ENCODE measurements at regions of chr18 and their contacts with region 1.

Region 1: DNA sequence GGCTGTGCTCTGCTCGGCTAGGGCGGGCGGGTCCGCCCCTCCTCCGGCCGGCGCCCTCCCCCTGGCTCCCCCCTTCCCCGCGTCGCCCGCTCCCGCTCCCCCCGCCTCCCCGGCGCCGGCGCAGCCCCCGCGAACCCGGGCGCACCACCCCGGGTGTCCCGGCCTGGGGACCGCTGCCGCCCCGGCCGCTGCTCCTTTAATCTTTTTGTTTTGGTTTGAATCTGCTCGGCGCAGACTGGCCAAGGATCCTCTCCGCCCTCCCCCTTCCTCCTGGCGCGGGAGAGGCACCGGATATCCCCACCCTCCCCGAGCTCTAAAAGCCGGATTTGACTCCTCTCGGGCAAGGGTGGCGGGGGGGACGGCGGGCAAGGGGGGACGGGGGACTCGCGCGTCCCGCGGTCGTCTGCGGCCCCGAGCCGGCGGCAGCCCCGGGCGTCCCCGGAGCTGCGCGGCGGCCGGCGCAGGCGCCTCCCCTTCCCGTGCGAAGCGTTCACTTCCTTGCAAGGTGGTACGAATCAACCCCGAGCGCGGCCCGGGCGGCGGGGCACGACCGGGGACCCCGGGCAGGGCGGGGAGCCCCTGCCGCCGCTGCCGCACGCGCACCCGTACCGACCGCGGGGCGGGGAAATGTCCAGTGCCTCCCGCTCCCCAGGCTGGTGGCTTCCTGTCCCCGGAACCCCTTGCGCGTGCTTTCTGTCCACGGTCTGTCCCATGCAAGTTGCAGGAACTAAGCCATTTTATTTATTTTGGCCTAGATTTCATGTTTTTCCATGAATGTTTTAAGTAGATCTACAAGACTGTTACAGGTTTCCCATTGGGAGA is at the start of gene PTGR3:
- DNase-seq: peak; percentile 44 to 91 (median 76)
- ATAC-seq: peak; percentile 51
- H3K4me3 ChIP-seq: peak within 1 kb of the TSS; percentile 65 to 82
- H3K4me3 Mint-ChIP-seq: peak within 1 kb of the TSS; percentile 99
- H3K27ac ChIP-seq: peak within 1 kb of the TSS; percentile 66 to 75
- H3K27ac Mint-ChIP-seq: peak within 1 kb of the TSS; percentile 93
- H3K4me1 ChIP-seq: peaks cover 55% of the 10 kb centered on the region
- H3K4me1 Mint-ChIP-seq: peaks cover 66% of the 10 kb centered on the region
- H3K27me3 ChIP-seq: no peaks in the 10 kb centered on the region
- H3K27me3 Mint-ChIP-seq: peaks cover 3% of the 10 kb centered on the region
- CTCF ChIP-seq: no peak
- total RNA-seq, gene PTGR3: 6.3 to 7.8 TPM

Region 2: DNA sequence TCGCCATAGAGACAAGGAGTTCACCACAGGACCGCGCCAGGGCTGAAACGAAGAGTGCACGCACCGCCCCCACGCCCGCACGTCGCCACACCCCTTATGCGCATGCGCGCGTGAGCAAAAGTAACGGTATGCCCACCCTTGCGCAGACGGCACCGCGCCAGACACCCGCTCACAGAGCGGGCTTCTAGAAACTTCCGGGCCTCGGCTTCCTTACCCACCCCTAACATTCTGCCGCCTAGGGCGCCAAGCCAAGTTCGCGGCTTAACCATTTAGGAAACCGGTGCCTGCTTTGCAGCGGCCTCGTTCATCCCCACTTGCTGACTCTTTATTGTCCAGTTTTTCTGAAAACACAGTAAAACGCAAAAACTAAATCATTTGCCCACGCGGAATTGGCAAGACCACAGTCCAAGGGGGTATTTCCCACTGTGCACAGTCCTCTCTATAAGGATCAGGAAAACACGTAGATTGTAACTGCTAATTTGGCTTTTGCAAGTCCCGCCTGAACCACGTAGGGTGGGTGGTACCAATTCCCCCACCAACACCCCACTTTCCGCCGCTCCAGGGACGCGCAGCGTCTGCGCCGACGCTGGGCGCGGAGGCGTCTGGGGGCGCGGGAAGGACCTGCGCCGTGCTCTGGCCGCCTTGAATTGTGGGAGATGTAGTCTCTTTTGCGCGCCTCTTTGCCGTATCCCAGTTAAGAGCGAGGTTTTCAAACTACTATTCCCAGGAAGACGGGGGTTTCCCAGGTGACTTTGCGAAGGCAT is 1061.4 kb before region 1 on chr18 and contains the starts of genes FBXO15 and TIMM21:
- CTCF ChIA-PET with region 1: no interaction called
- POLR2A ChIA-PET with region 1: no interaction called
- intact Hi-C with region 1: loop called (anchors 2 to 5 kb)
- DNase-seq: peak; percentile 89 to 99 (median 96)
- ATAC-seq: peak; percentile 83
- H3K4me3 ChIP-seq: peak within 1 kb of the TSS; percentile 84 to 91
- H3K4me3 Mint-ChIP-seq: peak within 1 kb of the TSS; percentile 90
- H3K27ac ChIP-seq: peak within 1 kb of the TSS; percentile 92 to 99
- H3K27ac Mint-ChIP-seq: peak within 1 kb of the TSS; percentile 92
- H3K4me1 ChIP-seq: peaks cover 21% of the 10 kb centered on the region
- H3K4me1 Mint-ChIP-seq: peaks cover 53% of the 10 kb centered on the region
- H3K27me3 ChIP-seq: no peaks in the 10 kb centered on the region
- H3K27me3 Mint-ChIP-seq: no peaks in the 10 kb centered on the region
- CTCF ChIP-seq: no peak
- total RNA-seq, gene FBXO15: 1.0 to 1.3 TPM
- total RNA-seq, gene TIMM21: 20.2 to 20.8 TPM

Region 3: DNA sequence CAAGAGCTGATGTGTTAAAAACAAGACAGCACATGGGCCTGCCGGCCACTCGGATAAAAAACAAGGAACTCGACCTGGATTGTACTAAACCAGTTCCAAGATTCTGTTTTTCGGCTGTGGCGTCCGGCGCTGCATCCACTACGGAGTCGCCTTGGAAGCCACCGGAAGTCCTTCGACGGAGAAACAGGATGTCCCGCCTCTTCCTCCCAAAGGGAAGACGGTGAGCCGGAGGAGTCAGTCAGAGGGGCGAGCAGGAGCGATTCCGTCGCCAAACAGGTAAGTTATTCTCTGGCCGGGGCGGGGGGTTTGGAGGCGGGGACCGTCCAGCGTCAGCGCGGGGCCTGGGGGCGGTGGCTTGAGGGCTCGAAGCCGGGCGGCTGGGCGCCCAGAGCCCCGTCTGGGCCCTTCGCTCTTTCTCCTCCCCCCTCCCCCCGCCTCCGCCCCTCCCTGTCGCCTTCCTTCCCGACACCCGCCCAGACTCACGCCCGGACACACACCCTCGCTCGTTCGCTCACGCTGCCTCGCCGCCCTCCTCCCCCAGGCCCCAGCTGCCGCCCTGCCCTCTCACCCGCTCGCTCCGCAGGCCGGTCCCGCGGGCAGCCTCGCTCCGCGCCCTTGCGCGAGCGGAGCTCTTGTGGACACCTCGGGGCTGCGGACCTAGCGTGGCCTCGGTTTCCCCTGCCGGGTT is 611.5 kb before region 1 on chr18 and contains the start of gene ZNF407:
- CTCF ChIA-PET with region 1: interaction called, 3 read pairs
- POLR2A ChIA-PET with region 1: interaction called, 8 read pairs
- intact Hi-C with region 1: loop called (anchors 1 kb)
- DNase-seq: peak; percentile 76 to 94 (median 86)
- ATAC-seq: peak; percentile 76
- H3K4me3 ChIP-seq: peak within 1 kb of the TSS; percentile 94 to 98
- H3K4me3 Mint-ChIP-seq: peak within 1 kb of the TSS; percentile 95
- H3K27ac ChIP-seq: peak within 1 kb of the TSS; percentile 94 to 98
- H3K27ac Mint-ChIP-seq: peak within 1 kb of the TSS; percentile 99
- H3K4me1 ChIP-seq: peaks cover 25% of the 10 kb centered on the region
- H3K4me1 Mint-ChIP-seq: peaks cover 50% of the 10 kb centered on the region
- H3K27me3 ChIP-seq: no peaks in the 10 kb centered on the region
- H3K27me3 Mint-ChIP-seq: no peaks in the 10 kb centered on the region
- CTCF ChIP-seq: no peak
- total RNA-seq, gene ZNF407: 18.4 to 18.5 TPM

Region 4: DNA sequence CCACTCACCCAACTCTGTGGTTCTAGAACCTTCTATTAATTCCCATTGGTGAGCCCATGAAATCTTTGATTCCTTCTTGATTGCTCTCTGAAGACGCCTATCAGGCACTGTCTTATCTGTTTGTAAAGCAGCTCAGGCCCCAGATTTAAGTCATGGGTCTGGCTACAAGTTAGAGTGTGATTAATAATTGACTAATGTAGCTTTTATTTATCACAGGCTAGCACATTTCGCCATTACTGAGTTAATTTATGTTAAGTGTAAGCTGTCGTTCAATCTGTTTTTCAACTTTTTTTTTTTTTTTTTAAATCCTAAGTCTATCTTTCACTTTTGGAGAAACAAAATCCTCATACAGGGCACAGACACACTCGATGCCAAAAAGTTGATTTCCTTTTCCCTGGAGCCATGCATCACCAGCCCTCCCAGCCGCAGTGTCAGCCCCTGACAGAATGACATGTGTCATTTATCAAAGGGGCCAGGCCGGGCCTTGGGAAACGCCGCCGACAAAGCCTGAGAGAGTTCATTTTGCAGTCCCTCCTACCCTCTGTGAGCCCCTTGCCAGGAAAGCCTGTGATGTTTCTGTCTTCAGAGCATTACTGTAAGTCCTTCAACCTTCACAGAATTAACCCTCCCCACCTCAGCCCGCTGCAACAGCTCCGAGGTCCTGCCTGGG is 17.1 kb after region 1 on chr18:
- CTCF ChIA-PET with region 1: interaction called, 4 read pairs
- POLR2A ChIA-PET with region 1: interaction called, 7 read pairs
- intact Hi-C with region 1: loop called in 1 of 2 experiments (anchors 2 kb)
- DNase-seq: no peak
- ATAC-seq: no peak
- H3K4me3 ChIP-seq: no peak overlapping the region
- H3K4me3 Mint-ChIP-seq: peak overlapping the region; percentile 38
- H3K27ac ChIP-seq: no peak overlapping the region
- H3K27ac Mint-ChIP-seq: peak overlapping the region; percentile 47
- H3K4me1 ChIP-seq: peaks cover 57% of the 10 kb centered on the region
- H3K4me1 Mint-ChIP-seq: peaks cover 76% of the 10 kb centered on the region
- H3K27me3 ChIP-seq: no peaks in the 10 kb centered on the region
- H3K27me3 Mint-ChIP-seq: no peaks in the 10 kb centered on the region
- CTCF ChIP-seq: no peak

Region 5: DNA sequence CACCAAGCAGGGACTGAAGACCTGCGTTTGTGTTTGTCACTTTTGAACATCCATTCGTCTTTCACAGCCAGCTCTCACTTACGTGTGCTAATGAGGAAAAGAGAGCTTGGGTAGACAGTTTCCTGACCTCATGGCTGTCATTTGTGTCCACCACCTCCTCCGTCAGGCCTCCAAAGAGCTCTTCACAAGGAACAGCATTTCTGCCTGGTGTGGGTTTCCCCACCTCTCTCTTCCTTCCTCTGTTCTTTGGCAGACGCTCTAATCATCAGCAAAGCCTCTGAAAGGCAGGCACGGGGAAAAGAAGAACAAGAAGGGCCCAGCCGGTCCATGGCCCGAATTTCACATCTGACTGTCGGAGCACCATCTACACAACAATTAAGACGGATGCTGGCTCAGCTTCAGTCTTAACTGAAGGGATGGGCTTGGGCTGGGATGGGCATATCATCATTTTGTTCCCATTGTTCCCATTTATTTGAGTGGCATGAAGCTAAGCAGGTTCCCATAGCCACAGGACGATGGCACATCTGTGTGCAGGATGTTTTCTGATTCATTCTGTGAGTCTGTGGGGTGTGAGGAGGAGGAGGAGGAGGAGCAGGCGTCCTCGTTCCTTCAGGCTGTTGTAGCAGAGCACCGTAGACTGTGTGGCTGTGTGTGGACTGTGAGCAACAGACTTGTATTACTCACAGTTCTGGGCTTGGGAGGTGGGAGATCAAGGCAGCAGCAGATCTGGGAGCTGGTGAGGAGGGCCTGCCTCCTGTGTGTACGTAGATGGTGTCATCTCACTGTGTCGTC is 67.7 kb after region 1 on chr18:
- CTCF ChIA-PET with region 1: no interaction called
- POLR2A ChIA-PET with region 1: no interaction called
- intact Hi-C with region 1: no loop called
- DNase-seq: peak in 1 of 9 experiments; percentile 24
- ATAC-seq: no peak
- H3K4me3 ChIP-seq: no peak overlapping the region
- H3K4me3 Mint-ChIP-seq: no peak overlapping the region
- H3K27ac ChIP-seq: no peak overlapping the region
- H3K27ac Mint-ChIP-seq: peak overlapping the region; percentile 32
- H3K4me1 ChIP-seq: peaks cover 6% of the 10 kb centered on the region
- H3K4me1 Mint-ChIP-seq: peaks cover 65% of the 10 kb centered on the region
- H3K27me3 ChIP-seq: no peaks in the 10 kb centered on the region
- H3K27me3 Mint-ChIP-seq: no peaks in the 10 kb centered on the region
- CTCF ChIP-seq: no peak

Region 6: GRCh38 chr18:75364512-75365253 is 155.3 kb after region 1 on chr18:
- CTCF ChIA-PET with region 1: interaction called, 3 read pairs
- POLR2A ChIA-PET with region 1: no interaction called
- intact Hi-C with region 1: loop called in 1 of 2 experiments (anchors 5 kb)
- DNase-seq: no peak
- ATAC-seq: no peak
- H3K4me3 ChIP-seq: no peak overlapping the region
- H3K4me3 Mint-ChIP-seq: no peak overlapping the region
- H3K27ac ChIP-seq: no peak overlapping the region
- H3K27ac Mint-ChIP-seq: no peak overlapping the region
- H3K4me1 ChIP-seq: no peaks in the 10 kb centered on the region
- H3K4me1 Mint-ChIP-seq: no peaks in the 10 kb centered on the region
- H3K27me3 ChIP-seq: peaks cover 0 to 4% of the 10 kb centered on the region in 2 experiments
- H3K27me3 Mint-ChIP-seq: peaks cover 2% of the 10 kb centered on the region
- CTCF ChIP-seq: no peak

Region 7: DNA sequence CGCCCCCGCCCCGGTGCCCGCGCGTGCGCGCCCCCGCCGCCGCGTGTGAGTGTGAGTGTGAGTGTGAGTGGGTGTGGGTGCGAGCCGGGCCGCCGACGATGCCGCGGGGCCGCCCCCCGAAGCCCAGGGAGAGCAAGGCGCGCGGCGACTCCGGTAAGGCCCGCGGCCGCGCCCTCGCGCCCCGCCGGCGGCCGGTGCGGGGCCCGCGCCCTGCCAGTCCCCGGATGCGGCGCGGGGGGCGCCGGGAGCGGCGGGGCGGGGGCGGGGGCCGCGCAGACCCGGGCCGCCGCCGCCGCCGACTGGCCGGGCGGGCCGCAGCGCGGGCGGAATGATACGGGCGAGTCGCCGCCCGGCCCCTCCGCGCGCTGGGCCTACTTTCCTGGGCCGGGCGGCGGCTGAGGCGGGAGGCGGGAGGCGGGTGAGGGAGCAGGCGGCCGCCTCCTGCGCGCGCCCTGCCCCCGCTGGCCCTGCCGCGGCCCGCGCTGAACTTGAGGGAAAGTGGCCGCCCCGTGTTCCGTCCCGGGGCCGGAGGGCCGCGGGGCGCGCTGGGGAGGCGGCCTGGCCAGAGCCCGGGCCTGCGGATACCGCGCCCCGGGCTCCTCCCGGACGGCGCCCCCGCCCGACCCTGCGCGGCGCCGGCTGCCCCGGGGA is 1613.3 kb after region 1 on chr18 and contains the start of gene ZNF236:
- CTCF ChIA-PET with region 1: no interaction called
- POLR2A ChIA-PET with region 1: no interaction called
- intact Hi-C with region 1: loop called (anchors 5 kb)
- DNase-seq: peak; percentile 43 to 86 (median 68)
- ATAC-seq: peak; percentile 50
- H3K4me3 ChIP-seq: peak within 1 kb of the TSS; percentile 75 to 97
- H3K4me3 Mint-ChIP-seq: peak within 1 kb of the TSS; percentile 93
- H3K27ac ChIP-seq: peak within 1 kb of the TSS; percentile 67 to 91
- H3K27ac Mint-ChIP-seq: peak within 1 kb of the TSS; percentile 96
- H3K4me1 ChIP-seq: peaks cover 28% of the 10 kb centered on the region
- H3K4me1 Mint-ChIP-seq: peaks cover 50% of the 10 kb centered on the region
- H3K27me3 ChIP-seq: no peaks in the 10 kb centered on the region
- H3K27me3 Mint-ChIP-seq: no peaks in the 10 kb centered on the region
- CTCF ChIP-seq: no peak
- total RNA-seq, gene ZNF236: 24.9 to 25.4 TPM